MCF 10A (cell line): ENCODE measurements at regions of chr9 and their contacts with region 1.

Region 1: DNA sequence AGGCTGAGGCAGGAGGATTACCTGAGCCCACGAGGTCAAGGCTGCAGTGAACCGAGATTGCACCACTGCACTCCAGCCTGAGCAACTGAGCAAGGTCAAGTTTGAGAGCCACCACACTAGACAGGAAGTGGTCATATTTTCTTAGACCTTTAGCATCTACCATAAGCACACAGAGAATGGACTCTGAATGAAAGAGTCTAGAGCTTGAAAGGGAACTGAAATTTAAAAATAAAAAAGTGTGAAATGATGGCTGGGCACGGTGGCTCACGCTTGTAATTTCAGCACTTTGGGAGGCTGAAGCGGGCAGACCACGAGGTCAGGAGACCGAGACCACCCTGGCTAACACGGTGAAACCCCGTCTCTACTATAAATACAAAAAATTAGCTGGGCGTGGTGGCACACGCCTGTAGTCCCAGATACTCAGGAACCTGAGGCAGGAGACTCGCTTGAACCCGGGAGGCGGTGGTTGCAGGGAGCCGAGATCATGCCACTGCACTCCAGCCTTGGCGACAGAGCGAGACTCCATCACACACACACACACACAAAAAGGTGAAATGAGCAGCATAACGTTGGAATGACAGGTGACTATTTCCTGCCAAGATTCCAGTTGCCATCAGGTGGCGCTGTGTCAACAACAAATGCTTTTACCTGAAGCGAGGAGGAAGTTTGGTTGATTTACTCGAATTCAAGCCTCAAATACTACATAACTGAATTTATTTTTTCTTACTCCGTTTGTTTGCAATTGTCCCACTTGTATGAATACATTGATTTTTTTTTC is 21.3 kb upstream of the AK3 start:
- DNase-seq: peak; percentile 85
- H3K4me3 Mint-ChIP-seq: no peak overlapping the region
- H3K27ac Mint-ChIP-seq: no peak overlapping the region
- H3K4me1 Mint-ChIP-seq: no peaks in the 10 kb centered on the region
- H3K27me3 Mint-ChIP-seq: peaks cover 12% of the 10 kb centered on the region
- CTCF ChIP-seq: peak; percentile 76

Region 2: DNA sequence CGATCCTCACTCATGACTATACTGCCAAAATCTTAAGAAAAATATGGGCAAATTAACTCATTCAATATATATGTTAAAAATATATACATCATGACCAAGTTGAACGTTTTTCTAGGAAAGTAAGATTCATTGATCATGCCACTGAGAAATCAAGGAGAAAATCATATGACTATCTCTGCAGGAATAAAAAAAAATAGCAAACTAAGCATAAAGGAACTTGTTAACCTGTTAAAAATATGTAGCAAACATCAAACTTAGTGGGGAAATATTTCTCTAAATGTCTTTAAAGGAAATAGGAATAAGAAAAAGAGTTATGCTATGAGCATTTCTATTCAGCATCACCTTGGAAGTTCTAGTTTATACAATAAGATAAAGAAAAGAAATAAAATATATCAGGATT is 764.8 kb before region 1 on chr9:
- CTCF ChIA-PET with region 1: no interaction called
- POLR2A ChIA-PET with region 1: no interaction called
- intact Hi-C with region 1: no loop called
- DNase-seq: no peak
- H3K4me3 Mint-ChIP-seq: no peak overlapping the region
- H3K27ac Mint-ChIP-seq: no peak overlapping the region
- H3K4me1 Mint-ChIP-seq: no peaks in the 10 kb centered on the region
- H3K27me3 Mint-ChIP-seq: no peaks in the 10 kb centered on the region
- CTCF ChIP-seq: no peak

Region 3: DNA sequence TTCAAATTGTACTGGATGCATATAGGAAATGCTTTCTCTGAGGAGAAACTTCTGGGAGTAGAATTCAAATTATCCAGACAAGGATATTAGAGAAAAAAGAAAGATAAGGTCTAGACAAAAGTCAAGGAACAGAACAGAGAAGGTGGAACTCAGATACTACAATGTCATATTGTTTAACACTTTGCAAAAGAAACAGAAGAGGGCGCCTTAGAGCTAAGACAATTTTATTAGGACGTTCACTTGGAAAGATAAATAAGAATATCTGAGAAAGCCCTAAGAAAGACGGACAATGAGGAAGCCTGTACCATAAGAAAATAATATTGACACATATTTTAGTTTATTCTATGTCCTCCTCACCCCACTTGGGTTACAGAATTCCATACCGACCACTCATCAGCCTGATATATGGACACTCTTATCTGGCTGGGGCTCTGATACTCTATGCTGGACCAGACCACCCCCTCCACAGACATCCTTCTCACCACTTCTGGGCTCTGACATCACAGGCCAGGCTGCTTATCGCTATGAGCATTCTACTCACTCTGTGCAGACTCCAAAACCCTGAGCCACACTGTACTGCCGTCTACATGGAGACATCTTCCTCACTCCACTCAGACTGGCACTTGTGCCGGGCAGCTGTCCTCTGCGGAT is 12.1 kb before region 1 on chr9:
- CTCF ChIA-PET with region 1: interaction called, 70 read pairs
- POLR2A ChIA-PET with region 1: no interaction called
- intact Hi-C with region 1: no loop called
- DNase-seq: peak; percentile 64
- H3K4me3 Mint-ChIP-seq: no peak overlapping the region
- H3K27ac Mint-ChIP-seq: no peak overlapping the region
- H3K4me1 Mint-ChIP-seq: peaks cover 7% of the 10 kb centered on the region
- H3K27me3 Mint-ChIP-seq: no peaks in the 10 kb centered on the region
- CTCF ChIP-seq: peak; percentile 38

Region 4: GRCh38 chr9:4792572-4793458 is 30.5 kb after region 1 on chr9 and contains the start of gene RCL1:
- CTCF ChIA-PET with region 1: interaction called, 175 read pairs
- POLR2A ChIA-PET with region 1: interaction called, 17 read pairs
- intact Hi-C with region 1: loop called (anchors 5 kb)
- DNase-seq: peak; percentile 95
- H3K4me3 Mint-ChIP-seq: peak within 1 kb of the TSS; percentile 100
- H3K27ac Mint-ChIP-seq: peak within 1 kb of the TSS; percentile 85
- H3K4me1 Mint-ChIP-seq: peaks cover 20% of the 10 kb centered on the region
- H3K27me3 Mint-ChIP-seq: no peaks in the 10 kb centered on the region
- CTCF ChIP-seq: no peak
- total RNA-seq, gene RCL1: 20.2 and 27.8 TPM in 2 replicates

Region 5: GRCh38 chr9:4923580-4924544 is 161.6 kb after region 1 on chr9:
- CTCF ChIA-PET with region 1: interaction called, 51 read pairs
- POLR2A ChIA-PET with region 1: interaction called, 3 read pairs
- intact Hi-C with region 1: loop called (anchors 1 kb)
- DNase-seq: peak; percentile 52
- H3K4me3 Mint-ChIP-seq: no peak overlapping the region
- H3K27ac Mint-ChIP-seq: no peak overlapping the region
- H3K4me1 Mint-ChIP-seq: no peaks in the 10 kb centered on the region
- H3K27me3 Mint-ChIP-seq: peaks cover 11% of the 10 kb centered on the region
- CTCF ChIP-seq: peak; percentile 32

Region 6: DNA sequence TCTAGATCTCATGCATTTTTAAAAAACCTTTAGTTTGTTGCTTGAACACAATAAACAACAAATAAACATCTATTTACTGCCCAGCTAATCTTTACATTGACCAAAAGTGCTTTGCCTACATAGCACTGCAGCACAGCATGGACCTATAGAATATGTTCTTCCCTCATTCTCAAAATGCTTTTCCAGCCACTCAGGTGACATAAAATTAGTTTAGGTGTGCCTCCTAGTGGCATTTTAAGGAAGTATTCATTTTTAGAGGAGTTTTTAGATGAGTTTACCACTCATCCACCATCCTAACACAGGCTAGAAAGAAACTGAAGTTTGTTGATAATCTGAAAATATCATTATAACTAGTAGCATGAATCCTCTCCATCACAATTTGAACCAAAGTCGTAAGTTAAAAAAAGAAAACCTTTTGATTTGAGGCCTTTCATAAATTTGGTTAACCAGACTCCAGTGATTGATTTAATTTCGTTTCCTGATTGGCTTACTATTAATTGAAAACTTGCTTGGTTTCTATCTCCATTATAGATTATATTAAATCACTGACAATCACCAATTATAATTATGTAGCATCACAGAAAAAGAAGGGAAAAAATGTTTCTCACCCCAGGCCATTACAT is 662.8 kb after region 1 on chr9:
- CTCF ChIA-PET with region 1: interaction called, 5 read pairs
- POLR2A ChIA-PET with region 1: no interaction called
- intact Hi-C with region 1: loop called (anchors 5 kb)
- DNase-seq: peak; percentile 44
- H3K4me3 Mint-ChIP-seq: no peak overlapping the region
- H3K27ac Mint-ChIP-seq: no peak overlapping the region
- H3K4me1 Mint-ChIP-seq: no peaks in the 10 kb centered on the region
- H3K27me3 Mint-ChIP-seq: no peaks in the 10 kb centered on the region
- CTCF ChIP-seq: peak; percentile 51